Esophagus muscularis mucosa (tissue), 4 donors: ENCODE measurements at regions of chr2 and their contacts with region 1.

Region 1: DNA sequence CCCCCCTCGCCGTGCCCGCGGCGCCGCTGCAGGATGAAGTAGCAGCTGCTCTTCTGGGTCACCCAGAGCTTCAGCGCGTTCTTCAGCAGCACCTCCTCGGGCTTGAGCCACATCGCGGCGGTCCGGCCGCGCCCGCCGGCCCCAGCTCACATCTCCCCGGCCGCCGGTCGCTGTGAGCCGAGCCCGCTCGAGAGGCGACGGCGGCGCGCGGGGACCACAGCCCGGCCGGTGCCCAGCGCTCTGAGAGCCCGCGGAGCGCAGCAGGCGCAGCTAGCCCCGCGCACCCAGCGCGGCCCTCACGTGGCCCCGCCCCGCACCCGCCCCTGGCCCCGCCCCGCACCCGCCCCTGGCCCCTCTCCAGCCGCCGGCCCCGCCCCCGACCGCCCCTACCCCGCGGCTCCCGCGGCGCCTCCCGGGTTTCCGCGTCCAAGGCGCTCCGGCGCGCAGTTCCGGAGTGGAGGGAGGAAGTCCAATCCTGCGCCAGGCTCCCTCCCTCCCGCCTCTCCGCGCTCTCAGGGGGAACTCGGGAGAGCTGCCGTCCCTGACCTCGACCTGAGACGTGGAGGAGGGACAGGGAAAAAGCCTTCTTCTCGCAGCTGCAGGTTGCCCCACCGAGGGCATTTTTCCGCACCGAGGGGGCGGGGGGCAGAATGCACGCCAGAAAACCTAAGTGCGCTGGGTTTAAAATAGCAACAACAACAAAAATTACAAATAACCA is at the start of gene TBC1D8:
- DNase-seq: no peak
- H3K4me3 ChIP-seq: peak within 1 kb of the TSS; percentile 80 to 86 (median 80)
- H3K27ac ChIP-seq: peak within 1 kb of the TSS; percentile 82 to 86 (median 84)
- H3K4me1 ChIP-seq: peaks cover 34 to 47% (median 41%) of the 10 kb centered on the region in 4 donors
- H3K27me3 ChIP-seq: no peaks in the 10 kb centered on the region
- CTCF ChIP-seq: peak in 1 of 3 experiments; percentile 8
- EP300 ChIP-seq: no peak
- POLR2A ChIP-seq: peak; percentile 67
- total RNA-seq, gene TBC1D8: 16.7 to 23.4 (median 20.4) TPM

Region 2: GRCh38 chr2:101012706-101013181 is 138.6 kb before region 1 on chr2:
- intact Hi-C with region 1: loop called (anchors 2 kb)
- DNase-seq: no peak
- H3K4me3 ChIP-seq: no peak overlapping the region
- H3K27ac ChIP-seq: no peak overlapping the region
- H3K4me1 ChIP-seq: peaks cover 0 to 8% (median 0%) of the 10 kb centered on the region in 4 donors
- H3K27me3 ChIP-seq: no peaks in the 10 kb centered on the region
- CTCF ChIP-seq: peak; percentile 85 to 88 (median 86)
- EP300 ChIP-seq: no peak
- POLR2A ChIP-seq: no peak

Region 3: DNA sequence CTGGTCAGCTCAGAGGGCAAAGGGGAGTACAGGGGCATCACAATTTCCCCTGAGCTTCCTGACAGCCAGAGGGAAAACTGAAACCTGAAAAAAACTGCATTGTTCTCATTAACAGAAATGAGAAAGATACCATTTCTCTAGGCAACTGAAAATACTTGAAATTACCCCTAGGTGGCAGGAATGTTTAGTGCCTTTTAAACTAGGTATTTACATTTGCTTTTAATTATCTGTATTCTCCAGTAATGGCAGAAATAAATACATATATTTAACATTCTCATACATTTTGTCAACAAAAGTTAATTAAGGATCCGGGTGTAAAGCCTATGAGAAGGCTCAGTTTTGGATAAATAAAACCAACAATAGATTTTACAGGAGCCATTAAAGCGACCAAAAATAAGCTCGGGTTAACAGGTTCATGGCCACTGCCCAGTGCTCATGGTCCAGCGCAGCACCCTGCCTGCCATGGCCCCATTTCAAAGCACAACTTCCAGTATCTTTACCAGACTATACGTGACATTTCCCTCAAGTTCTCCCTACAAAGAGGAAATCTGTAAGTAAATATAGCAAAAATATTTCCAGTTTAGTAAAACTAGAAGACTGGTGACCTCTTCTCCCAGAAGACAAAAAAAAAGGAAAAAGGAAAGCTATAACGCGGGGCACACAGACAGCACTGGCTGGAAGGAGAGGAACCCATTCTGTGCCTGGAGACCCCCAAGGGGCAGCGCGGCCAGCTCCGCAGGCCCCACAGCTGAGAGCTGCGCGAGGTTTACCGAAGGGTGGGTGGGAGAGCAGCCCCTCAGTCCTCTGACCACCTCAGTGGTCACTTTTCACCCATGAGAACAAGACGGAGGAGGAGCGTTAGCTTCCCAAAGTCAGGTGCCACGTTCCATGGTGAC is 114.5 kb before region 1 on chr2:
- intact Hi-C with region 1: loop called (anchors 2 kb)
- DNase-seq: no peak
- H3K4me3 ChIP-seq: no peak overlapping the region
- H3K27ac ChIP-seq: no peak overlapping the region
- H3K4me1 ChIP-seq: no peaks in the 10 kb centered on the region
- H3K27me3 ChIP-seq: no peaks in the 10 kb centered on the region
- CTCF ChIP-seq: peak; percentile 50 to 57 (median 51)
- EP300 ChIP-seq: no peak
- POLR2A ChIP-seq: no peak

Region 4: GRCh38 chr2:101113396-101114267 is 37.7 kb before region 1 on chr2:
- intact Hi-C with region 1: loop called (anchors 5 kb)
- DNase-seq: no peak
- H3K4me3 ChIP-seq: no peak overlapping the region
- H3K27ac ChIP-seq: peak overlapping the region in 1 of 4 donors; percentile 23
- H3K4me1 ChIP-seq: peaks cover 69 to 83% (median 82%) of the 10 kb centered on the region in 4 donors
- H3K27me3 ChIP-seq: no peaks in the 10 kb centered on the region
- CTCF ChIP-seq: no peak
- EP300 ChIP-seq: no peak
- POLR2A ChIP-seq: no peak

Region 5: DNA sequence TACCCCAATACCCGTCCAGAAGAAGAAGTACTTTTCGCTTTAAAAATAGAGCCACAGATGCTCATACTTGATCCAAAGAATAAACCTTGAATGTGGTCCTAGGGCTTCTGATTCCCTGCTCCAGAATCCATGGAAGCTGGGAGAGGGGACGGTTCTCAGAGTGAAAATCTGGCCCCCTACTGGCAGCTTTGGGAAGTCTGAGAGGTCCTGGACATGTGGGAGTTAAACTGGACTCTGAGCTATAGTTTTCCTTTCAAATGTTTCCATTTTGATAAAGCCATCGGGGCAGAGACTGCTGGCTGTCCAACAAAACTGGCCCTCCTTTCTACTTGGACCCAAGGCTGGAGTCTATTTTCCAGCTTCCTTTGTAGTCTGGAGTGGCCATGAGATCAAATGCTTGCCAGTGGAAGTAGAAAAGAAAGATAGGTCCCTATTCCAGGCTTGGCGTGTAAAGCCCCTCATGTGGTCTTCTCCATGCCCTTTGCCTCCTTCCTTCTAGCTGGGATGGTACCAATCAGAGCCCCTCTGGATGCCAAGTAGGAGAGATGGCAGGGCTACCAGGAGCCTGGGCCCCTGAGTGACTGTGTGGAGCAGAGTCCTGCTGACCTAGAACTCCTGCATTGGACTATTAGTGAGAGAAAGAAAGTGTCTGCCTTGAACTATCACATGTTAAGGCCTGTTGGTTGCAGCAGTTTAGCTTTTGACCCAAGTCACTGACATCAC is 37.5 kb after region 1 on chr2:
- intact Hi-C with region 1: no loop called
- DNase-seq: no peak
- H3K4me3 ChIP-seq: no peak overlapping the region
- H3K27ac ChIP-seq: no peak overlapping the region
- H3K4me1 ChIP-seq: no peaks in the 10 kb centered on the region
- H3K27me3 ChIP-seq: no peaks in the 10 kb centered on the region
- CTCF ChIP-seq: peak; percentile 21 to 52 (median 21)
- EP300 ChIP-seq: no peak
- POLR2A ChIP-seq: no peak

Region 6: GRCh38 chr2:101230541-101230993 is 79.3 kb after region 1 on chr2:
- intact Hi-C with region 1: no loop called
- DNase-seq: no peak
- H3K4me3 ChIP-seq: no peak overlapping the region
- H3K27ac ChIP-seq: no peak overlapping the region
- H3K4me1 ChIP-seq: no peaks in the 10 kb centered on the region
- H3K27me3 ChIP-seq: no peaks in the 10 kb centered on the region
- CTCF ChIP-seq: no peak
- EP300 ChIP-seq: no peak
- POLR2A ChIP-seq: no peak